ENCODE measurements at regions of chr5 and their contacts with region 1.

Region 1: GRCh38 chr5:146533260-146533857 is 17.4 kb upstream of the GPR151 start:
- DNase-seq: peak; percentile 64
- ATAC-seq: peak; percentile 61
- H3K4me3 ChIP-seq: no peak overlapping the region
- H3K4me3 Mint-ChIP-seq: no peak overlapping the region
- H3K27ac ChIP-seq: no peak overlapping the region
- H3K27ac Mint-ChIP-seq: no peak overlapping the region
- H3K4me1 ChIP-seq: no peaks in the 10 kb centered on the region
- H3K4me1 Mint-ChIP-seq: peaks cover 4% of the 10 kb centered on the region
- H3K27me3 ChIP-seq: no peaks in the 10 kb centered on the region
- H3K27me3 Mint-ChIP-seq: peaks cover 5% of the 10 kb centered on the region
- CTCF ChIP-seq: peak; percentile 82

Region 2: GRCh38 chr5:146520731-146521130 is 12.6 kb before region 1 on chr5:
- CTCF ChIA-PET with region 1: interaction called, 15 read pairs
- POLR2A ChIA-PET with region 1: no interaction called
- intact Hi-C with region 1: no loop called
- DNase-seq: no peak
- ATAC-seq: no peak
- H3K4me3 ChIP-seq: no peak overlapping the region
- H3K4me3 Mint-ChIP-seq: no peak overlapping the region
- H3K27ac ChIP-seq: no peak overlapping the region
- H3K27ac Mint-ChIP-seq: no peak overlapping the region
- H3K4me1 ChIP-seq: no peaks in the 10 kb centered on the region
- H3K4me1 Mint-ChIP-seq: peaks cover 2% of the 10 kb centered on the region
- H3K27me3 ChIP-seq: peaks cover 0 to 3% (median 0%) of the 10 kb centered on the region in 4 experiments
- H3K27me3 Mint-ChIP-seq: peaks cover 21% of the 10 kb centered on the region
- CTCF ChIP-seq: no peak

Region 3: GRCh38 chr5:146965761-146966659 is 432.7 kb after region 1 on chr5:
- CTCF ChIA-PET with region 1: interaction called, 28 read pairs
- POLR2A ChIA-PET with region 1: no interaction called
- intact Hi-C with region 1: no loop called
- DNase-seq: peak; percentile 61
- ATAC-seq: peak; percentile 64
- H3K4me3 ChIP-seq: no peak overlapping the region
- H3K4me3 Mint-ChIP-seq: no peak overlapping the region
- H3K27ac ChIP-seq: no peak overlapping the region
- H3K27ac Mint-ChIP-seq: no peak overlapping the region
- H3K4me1 ChIP-seq: no peaks in the 10 kb centered on the region
- H3K4me1 Mint-ChIP-seq: no peaks in the 10 kb centered on the region
- H3K27me3 ChIP-seq: no peaks in the 10 kb centered on the region
- H3K27me3 Mint-ChIP-seq: no peaks in the 10 kb centered on the region
- CTCF ChIP-seq: peak; percentile 81

Region 4: GRCh38 chr5:147188200-147189108 is 655.1 kb after region 1 on chr5:
- CTCF ChIA-PET with region 1: interaction called, 8 read pairs
- POLR2A ChIA-PET with region 1: no interaction called
- intact Hi-C with region 1: loop called (anchors 5 kb)
- DNase-seq: peak; percentile 35
- ATAC-seq: no peak
- H3K4me3 ChIP-seq: no peak overlapping the region
- H3K4me3 Mint-ChIP-seq: no peak overlapping the region
- H3K27ac ChIP-seq: no peak overlapping the region
- H3K27ac Mint-ChIP-seq: no peak overlapping the region
- H3K4me1 ChIP-seq: no peaks in the 10 kb centered on the region
- H3K4me1 Mint-ChIP-seq: no peaks in the 10 kb centered on the region
- H3K27me3 ChIP-seq: no peaks in the 10 kb centered on the region
- H3K27me3 Mint-ChIP-seq: no peaks in the 10 kb centered on the region
- CTCF ChIP-seq: peak; percentile 83

Region 5: GRCh38 chr5:147613359-147613758 is 1080.0 kb after region 1 on chr5:
- CTCF ChIA-PET with region 1: no interaction called
- POLR2A ChIA-PET with region 1: no interaction called
- intact Hi-C with region 1: no loop called
- DNase-seq: no peak
- ATAC-seq: no peak
- H3K4me3 ChIP-seq: no peak overlapping the region
- H3K4me3 Mint-ChIP-seq: no peak overlapping the region
- H3K27ac ChIP-seq: no peak overlapping the region
- H3K27ac Mint-ChIP-seq: no peak overlapping the region
- H3K4me1 ChIP-seq: no peaks in the 10 kb centered on the region
- H3K4me1 Mint-ChIP-seq: no peaks in the 10 kb centered on the region
- H3K27me3 ChIP-seq: no peaks in the 10 kb centered on the region
- H3K27me3 Mint-ChIP-seq: no peaks in the 10 kb centered on the region
- CTCF ChIP-seq: no peak

Region 6: GRCh38 chr5:147822686-147823491 is 1289.5 kb after region 1 on chr5:
- CTCF ChIA-PET with region 1: no interaction called
- POLR2A ChIA-PET with region 1: no interaction called
- intact Hi-C with region 1: loop called (anchors 10 kb)
- DNase-seq: peak; percentile 63
- ATAC-seq: peak; percentile 58
- H3K4me3 ChIP-seq: no peak overlapping the region
- H3K4me3 Mint-ChIP-seq: no peak overlapping the region
- H3K27ac ChIP-seq: no peak overlapping the region
- H3K27ac Mint-ChIP-seq: no peak overlapping the region
- H3K4me1 ChIP-seq: no peaks in the 10 kb centered on the region
- H3K4me1 Mint-ChIP-seq: no peaks in the 10 kb centered on the region
- H3K27me3 ChIP-seq: no peaks in the 10 kb centered on the region
- H3K27me3 Mint-ChIP-seq: peaks cover 7% of the 10 kb centered on the region
- CTCF ChIP-seq: peak; percentile 94

Measured in B cell (primary cell).